H1 (cell line): ENCODE measurements at regions of chr12 and their contacts with region 1.

Region 1: GRCh38 chr12:112025808-112026375 is 12.7 kb downstream of the ERP29 start:
- DNase-seq: no peak
- H3K4me3 ChIP-seq: no peak overlapping the region
- H3K27ac ChIP-seq: no peak overlapping the region
- H3K4me1 ChIP-seq: peaks cover 0 to 2% (median 0%) of the 10 kb centered on the region in 4 experiments; a peak in 1 of 7 replicates
- H3K27me3 ChIP-seq: no peaks in the 10 kb centered on the region
- CTCF ChIP-seq: no peak
- EP300 ChIP-seq: no peak
- POLR2A ChIP-seq: no peak
- RAD21 ChIP-seq: no peak

Region 2: GRCh38 chr12:111942557-111942956 is 83.3 kb before region 1 on chr12:
- CTCF ChIA-PET with region 1: interaction called, 18 read pairs
- POLR2A ChIA-PET with region 1: interaction called, 5 read pairs
- DNase-seq: no peak
- H3K4me3 ChIP-seq: no peak overlapping the region
- H3K27ac ChIP-seq: no peak overlapping the region
- H3K4me1 ChIP-seq: no peaks in the 10 kb centered on the region
- H3K27me3 ChIP-seq: no peaks in the 10 kb centered on the region
- CTCF ChIP-seq: no peak
- EP300 ChIP-seq: no peak
- POLR2A ChIP-seq: no peak
- RAD21 ChIP-seq: no peak

Region 3: GRCh38 chr12:112096667-112097066 is 70.8 kb after region 1 on chr12:
- CTCF ChIA-PET with region 1: no interaction called
- POLR2A ChIA-PET with region 1: no interaction called
- DNase-seq: no peak
- H3K4me3 ChIP-seq: no peak overlapping the region
- H3K27ac ChIP-seq: no peak overlapping the region
- H3K4me1 ChIP-seq: no peaks in the 10 kb centered on the region
- H3K27me3 ChIP-seq: no peaks in the 10 kb centered on the region
- CTCF ChIP-seq: no peak
- EP300 ChIP-seq: no peak
- POLR2A ChIP-seq: no peak
- RAD21 ChIP-seq: no peak